Calu3 (cell line): ENCODE measurements at regions of chr5 and their contacts with region 1.

Region 1: GRCh38 chr5:93800988-93801811 is 59.8 kb upstream of the POU5F2 start:
- DNase-seq: peak; percentile 58
- H3K4me3 Mint-ChIP-seq: no peak overlapping the region
- H3K27ac Mint-ChIP-seq: peak overlapping the region; percentile 55
- H3K4me1 Mint-ChIP-seq: peaks cover 15% of the 10 kb centered on the region
- H3K27me3 Mint-ChIP-seq: no peaks in the 10 kb centered on the region
- CTCF ChIP-seq: peak; percentile 84

Region 2: DNA sequence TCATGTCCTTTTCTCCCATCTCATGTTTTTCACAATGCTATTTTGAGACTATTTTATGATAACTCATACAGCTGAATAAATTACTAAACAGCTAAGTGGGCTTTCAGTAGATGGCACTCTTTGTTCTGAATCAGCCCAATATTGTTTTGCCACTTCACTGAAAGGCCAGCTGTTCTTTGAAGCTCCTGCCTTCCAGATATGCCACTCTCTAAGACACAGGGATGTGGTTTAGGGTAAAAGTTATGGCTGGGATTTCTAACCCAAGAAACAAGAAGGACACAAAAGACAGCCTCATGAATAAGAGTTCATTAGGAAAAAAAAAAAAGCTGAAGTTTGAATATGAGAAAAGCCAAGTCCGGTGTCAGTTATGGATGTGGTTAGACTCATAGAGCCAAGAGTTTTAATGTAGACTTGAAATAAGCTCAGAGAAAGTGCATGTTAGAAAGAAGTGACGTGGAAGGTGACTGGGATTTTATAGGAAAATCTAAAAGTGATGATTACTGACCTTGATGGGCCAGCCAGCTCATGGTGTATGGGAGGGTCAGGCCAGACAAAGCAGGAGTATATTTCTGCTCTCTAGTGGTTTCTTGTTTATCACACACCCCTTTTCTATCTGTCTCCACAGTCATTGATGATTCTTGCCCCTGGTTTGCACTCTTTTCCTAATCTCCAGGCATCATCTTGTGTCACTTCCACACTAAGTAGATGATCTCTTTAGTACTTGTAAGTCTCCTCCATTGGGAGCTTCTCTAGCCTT is 708.7 kb before region 1 on chr5:
- CTCF ChIA-PET with region 1: interaction called, 10 read pairs
- intact Hi-C with region 1: no loop called
- DNase-seq: no peak
- H3K4me3 Mint-ChIP-seq: no peak overlapping the region
- H3K27ac Mint-ChIP-seq: no peak overlapping the region
- H3K4me1 Mint-ChIP-seq: peaks cover 12% of the 10 kb centered on the region
- H3K27me3 Mint-ChIP-seq: no peaks in the 10 kb centered on the region
- CTCF ChIP-seq: no peak

Region 3: DNA sequence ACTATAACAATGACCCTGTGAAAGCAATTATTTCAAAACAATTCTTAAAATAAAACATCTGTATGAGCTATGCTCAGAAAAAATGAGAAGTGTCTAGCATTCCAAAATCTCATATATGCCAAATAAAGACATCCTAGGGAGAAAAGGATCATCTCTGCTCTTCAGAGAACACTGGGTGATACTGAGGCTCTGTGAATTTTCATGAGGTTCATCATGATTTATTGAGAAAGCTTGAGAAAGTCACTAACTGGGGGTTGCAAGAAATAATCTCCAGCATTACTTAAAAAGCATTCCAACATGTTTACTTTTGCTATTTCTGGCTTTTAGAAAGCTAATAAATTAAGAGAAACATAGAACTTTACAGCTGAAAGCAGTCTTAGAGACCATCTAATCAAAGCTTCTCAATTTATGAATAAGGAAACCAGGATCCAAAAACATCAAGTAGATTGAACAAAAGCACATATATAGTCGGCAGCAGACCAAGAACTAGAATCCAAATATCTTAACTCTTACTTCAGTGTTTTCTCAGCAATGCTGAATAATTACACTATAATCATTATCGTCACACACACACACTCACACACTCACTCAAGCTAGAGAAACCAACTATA is 593.0 kb before region 1 on chr5:
- CTCF ChIA-PET with region 1: no interaction called
- intact Hi-C with region 1: no loop called
- DNase-seq: no peak
- H3K4me3 Mint-ChIP-seq: no peak overlapping the region
- H3K27ac Mint-ChIP-seq: no peak overlapping the region
- H3K4me1 Mint-ChIP-seq: no peaks in the 10 kb centered on the region
- H3K27me3 Mint-ChIP-seq: no peaks in the 10 kb centered on the region
- CTCF ChIP-seq: no peak

Region 4: DNA sequence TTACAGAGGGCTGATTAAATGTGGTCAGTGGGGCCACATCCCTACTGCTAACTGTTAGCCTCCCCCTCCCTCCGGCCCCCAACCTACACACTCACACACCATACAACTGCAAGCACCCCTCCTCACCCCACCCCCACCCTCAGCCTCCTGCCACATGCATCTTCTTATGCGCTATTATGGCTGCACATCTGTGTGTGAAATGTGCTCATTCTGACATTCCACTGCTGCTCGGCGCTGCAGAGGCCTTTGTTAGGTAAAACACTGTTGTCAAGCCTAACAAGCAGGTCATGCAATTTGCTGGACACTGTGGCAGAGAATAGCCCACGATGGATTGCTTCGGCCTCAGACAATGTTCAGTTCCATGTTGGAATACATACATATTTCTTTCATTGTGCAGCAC is 393.7 kb before region 1 on chr5:
- CTCF ChIA-PET with region 1: no interaction called
- intact Hi-C with region 1: loop called (anchors 10 kb)
- DNase-seq: no peak
- H3K4me3 Mint-ChIP-seq: no peak overlapping the region
- H3K27ac Mint-ChIP-seq: no peak overlapping the region
- H3K4me1 Mint-ChIP-seq: peaks cover 20% of the 10 kb centered on the region
- H3K27me3 Mint-ChIP-seq: no peaks in the 10 kb centered on the region
- CTCF ChIP-seq: no peak

Region 5: GRCh38 chr5:93607367-93608258 is 193.6 kb before region 1 on chr5:
- CTCF ChIA-PET with region 1: interaction called, 14 read pairs
- intact Hi-C with region 1: loop called (anchors 2 kb)
- DNase-seq: peak; percentile 44
- H3K4me3 Mint-ChIP-seq: no peak overlapping the region
- H3K27ac Mint-ChIP-seq: no peak overlapping the region
- H3K4me1 Mint-ChIP-seq: peaks cover 26% of the 10 kb centered on the region
- H3K27me3 Mint-ChIP-seq: peaks cover 47% of the 10 kb centered on the region
- CTCF ChIP-seq: peak; percentile 64

Region 6: DNA sequence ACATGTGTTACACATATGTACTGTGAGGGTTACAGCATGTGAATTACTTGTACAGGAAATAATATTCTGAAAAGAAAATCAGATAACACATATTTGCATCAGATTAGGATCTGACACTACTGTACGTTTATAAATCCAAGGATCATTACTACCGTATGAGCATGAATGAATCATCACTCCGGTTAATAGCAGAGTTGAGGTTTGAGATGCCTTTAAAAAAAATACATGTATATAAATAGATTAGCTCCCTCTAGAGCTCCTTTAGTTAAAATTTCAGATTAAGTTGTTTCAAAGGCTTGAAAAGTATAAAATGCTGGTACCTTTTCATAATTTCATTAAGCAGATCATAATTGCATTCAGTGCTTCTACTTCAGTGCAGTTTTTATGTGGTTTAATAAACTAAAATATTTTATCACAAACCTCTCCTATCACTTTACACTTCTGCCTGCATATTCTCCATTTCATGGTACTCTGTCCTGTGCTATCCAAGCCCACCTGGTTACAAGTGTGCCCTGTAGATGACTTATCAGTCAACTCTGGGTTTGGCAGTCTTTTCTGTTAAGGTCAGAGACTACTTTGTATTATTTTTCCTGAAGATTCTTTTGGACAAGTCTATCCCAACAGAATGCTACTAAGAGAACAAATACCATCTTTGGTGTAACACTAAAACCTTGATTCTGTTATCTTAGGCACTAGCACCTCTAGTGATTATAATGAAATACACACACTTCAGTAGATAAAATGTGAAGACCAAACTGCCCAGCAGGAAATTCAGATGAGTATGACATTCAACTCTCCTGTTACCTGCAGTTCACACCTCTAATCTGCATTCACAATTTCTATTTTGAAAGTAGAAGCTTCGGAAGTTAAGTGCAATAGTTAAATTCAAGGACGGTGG is 11.8 kb before region 1 on chr5:
- CTCF ChIA-PET with region 1: interaction called, 14 read pairs
- intact Hi-C with region 1: no loop called
- DNase-seq: no peak
- H3K4me3 Mint-ChIP-seq: no peak overlapping the region
- H3K27ac Mint-ChIP-seq: no peak overlapping the region
- H3K4me1 Mint-ChIP-seq: peaks cover 9% of the 10 kb centered on the region
- H3K27me3 Mint-ChIP-seq: no peaks in the 10 kb centered on the region
- CTCF ChIP-seq: no peak

Region 7: GRCh38 chr5:93821891-93822415 is 20.8 kb after region 1 on chr5:
- CTCF ChIA-PET with region 1: no interaction called
- intact Hi-C with region 1: no loop called
- DNase-seq: no peak
- H3K4me3 Mint-ChIP-seq: no peak overlapping the region
- H3K27ac Mint-ChIP-seq: no peak overlapping the region
- H3K4me1 Mint-ChIP-seq: no peaks in the 10 kb centered on the region
- H3K27me3 Mint-ChIP-seq: no peaks in the 10 kb centered on the region
- CTCF ChIP-seq: no peak